GM12878 (cell line): ENCODE measurements at regions of chr21 and their contacts with region 1.

Region 1: GRCh38 chr21:26842976-26843932 is 2.0 kb downstream of the ADAMTS1 start:
- DNase-seq: no peak
- ATAC-seq: no peak
- H3K4me3 ChIP-seq: no peak overlapping the region
- H3K27ac ChIP-seq: no peak overlapping the region
- H3K4me1 ChIP-seq: no peaks in the 10 kb centered on the region
- H3K27me3 ChIP-seq: no peaks in the 10 kb centered on the region
- CTCF ChIP-seq: no peak
- EP300 ChIP-seq: no peak
- POLR2A ChIP-seq: no peak; the same call in 1 of the 2 replicates
- RAD21 ChIP-seq: no peak

Region 2: DNA sequence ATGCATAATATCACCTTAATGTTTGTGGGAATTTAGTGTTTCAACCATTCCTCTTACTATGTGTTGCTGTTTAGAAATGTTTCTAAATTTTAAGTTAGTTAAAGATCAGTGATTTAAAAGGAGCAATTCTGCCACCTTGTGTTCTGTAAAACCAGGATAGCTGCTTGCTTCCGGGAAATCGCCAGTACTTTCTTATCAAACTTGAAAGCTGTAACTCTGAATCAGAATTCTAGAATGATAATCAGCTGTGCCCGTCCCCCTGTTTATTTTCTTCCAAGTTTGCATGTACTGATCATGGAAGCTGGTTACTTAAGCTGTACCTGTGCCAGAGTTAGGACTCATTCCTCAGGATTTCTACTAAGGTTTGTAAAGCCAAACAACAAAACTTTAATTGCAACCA is 1493.1 kb after region 1 on chr21:
- CTCF ChIA-PET with region 1: interaction called, 6 read pairs
- POLR2A ChIA-PET with region 1: no interaction called
- RAD21 ChIA-PET with region 1: no interaction called
- SMC1A ChIA-PET with region 1: no interaction called
- in situ Hi-C with region 1: no loop called
- intact Hi-C with region 1: loop called (anchors 5 kb)
- DNase-seq: no peak
- ATAC-seq: no peak
- H3K4me3 ChIP-seq: no peak overlapping the region
- H3K27ac ChIP-seq: no peak overlapping the region
- H3K4me1 ChIP-seq: no peaks in the 10 kb centered on the region
- H3K27me3 ChIP-seq: no peaks in the 10 kb centered on the region
- CTCF ChIP-seq: no peak
- EP300 ChIP-seq: no peak
- POLR2A ChIP-seq: no peak
- RAD21 ChIP-seq: no peak

Region 3: GRCh38 chr21:28516991-28517592 is 1673.8 kb after region 1 on chr21:
- CTCF ChIA-PET with region 1: no interaction called
- POLR2A ChIA-PET with region 1: no interaction called
- RAD21 ChIA-PET with region 1: no interaction called
- SMC1A ChIA-PET with region 1: no interaction called
- in situ Hi-C with region 1: no loop called
- intact Hi-C with region 1: loop called (anchors 10 kb)
- DNase-seq: peak; percentile 8
- ATAC-seq: peak; percentile 77
- H3K4me3 ChIP-seq: no peak overlapping the region
- H3K27ac ChIP-seq: no peak overlapping the region
- H3K4me1 ChIP-seq: no peaks in the 10 kb centered on the region
- H3K27me3 ChIP-seq: no peaks in the 10 kb centered on the region
- CTCF ChIP-seq: peak; percentile 57 to 65 (median 61); a peak in 5 of 6 replicates
- EP300 ChIP-seq: no peak
- POLR2A ChIP-seq: no peak
- RAD21 ChIP-seq: peak; percentile 24; the same call in 1 of the 2 replicates